B cell (primary cell): ENCODE measurements at regions of chr10 and their contacts with region 1.

Region 1: GRCh38 chr10:74234569-74234968 is 83.5 kb downstream of the ADK start:
- DNase-seq: no peak
- ATAC-seq: no peak
- H3K4me3 ChIP-seq: no peak overlapping the region
- H3K4me3 Mint-ChIP-seq: no peak overlapping the region
- H3K27ac ChIP-seq: peak overlapping the region in 1 of 2 donors; percentile 12
- H3K27ac Mint-ChIP-seq: no peak overlapping the region
- H3K4me1 ChIP-seq: peaks cover 0 to 2% of the 10 kb centered on the region in 2 donors
- H3K4me1 Mint-ChIP-seq: peaks cover 18% of the 10 kb centered on the region
- H3K27me3 ChIP-seq: no peaks in the 10 kb centered on the region
- H3K27me3 Mint-ChIP-seq: no peaks in the 10 kb centered on the region
- CTCF ChIP-seq: peak; percentile 63

Region 2: DNA sequence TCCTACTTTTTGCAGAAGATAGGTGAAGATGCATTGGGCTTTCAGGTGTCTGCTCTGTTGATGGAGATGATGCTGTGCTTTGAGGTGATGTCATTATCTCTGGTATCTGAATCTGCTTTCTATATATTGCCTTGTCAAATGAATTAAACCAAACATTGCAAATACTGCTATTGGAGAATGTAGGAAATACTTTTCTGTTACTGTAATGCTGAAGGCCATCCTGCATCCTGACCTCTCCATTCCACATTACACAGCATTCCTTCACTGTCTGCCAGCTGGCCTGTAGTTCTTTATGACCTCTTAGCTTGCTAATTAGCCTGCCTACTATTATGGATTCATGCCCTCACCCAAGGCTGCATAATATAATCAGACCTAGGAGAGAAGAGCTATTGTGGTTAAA is 163.4 kb before region 1 on chr10:
- CTCF ChIA-PET with region 1: no interaction called
- POLR2A ChIA-PET with region 1: no interaction called
- intact Hi-C with region 1: no loop called
- DNase-seq: no peak
- ATAC-seq: no peak
- H3K4me3 ChIP-seq: no peak overlapping the region
- H3K4me3 Mint-ChIP-seq: no peak overlapping the region
- H3K27ac ChIP-seq: no peak overlapping the region
- H3K27ac Mint-ChIP-seq: no peak overlapping the region
- H3K4me1 ChIP-seq: peaks cover 2 to 3% of the 10 kb centered on the region in 2 donors
- H3K4me1 Mint-ChIP-seq: peaks cover 8% of the 10 kb centered on the region
- H3K27me3 ChIP-seq: no peaks in the 10 kb centered on the region
- H3K27me3 Mint-ChIP-seq: no peaks in the 10 kb centered on the region
- CTCF ChIP-seq: no peak

Region 3: DNA sequence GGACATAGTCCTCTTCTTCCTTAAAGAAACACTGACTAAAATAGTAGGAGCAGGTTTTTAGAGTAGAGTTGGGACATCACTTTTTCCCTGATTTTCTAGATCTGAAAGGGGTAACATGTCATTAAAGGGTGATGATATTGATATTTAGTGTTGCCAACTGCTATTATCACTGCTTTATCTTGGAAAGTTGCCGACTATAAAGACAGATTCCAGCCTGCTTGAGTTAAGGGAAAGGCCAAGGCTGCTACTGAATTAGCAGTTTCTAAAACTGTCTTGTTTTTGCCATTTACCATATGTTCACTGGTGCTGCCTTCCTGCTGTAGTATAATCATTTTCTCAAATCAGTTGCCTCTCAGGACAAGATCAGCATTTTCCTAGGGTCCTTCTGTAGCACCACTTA is 113.7 kb before region 1 on chr10:
- CTCF ChIA-PET with region 1: interaction called, 18 read pairs
- POLR2A ChIA-PET with region 1: no interaction called
- intact Hi-C with region 1: no loop called
- DNase-seq: no peak
- ATAC-seq: no peak
- H3K4me3 ChIP-seq: no peak overlapping the region
- H3K4me3 Mint-ChIP-seq: no peak overlapping the region
- H3K27ac ChIP-seq: no peak overlapping the region
- H3K27ac Mint-ChIP-seq: peak overlapping the region; percentile 16
- H3K4me1 ChIP-seq: no peaks in the 10 kb centered on the region
- H3K4me1 Mint-ChIP-seq: no peaks in the 10 kb centered on the region
- H3K27me3 ChIP-seq: no peaks in the 10 kb centered on the region
- H3K27me3 Mint-ChIP-seq: no peaks in the 10 kb centered on the region
- CTCF ChIP-seq: no peak

Region 4: DNA sequence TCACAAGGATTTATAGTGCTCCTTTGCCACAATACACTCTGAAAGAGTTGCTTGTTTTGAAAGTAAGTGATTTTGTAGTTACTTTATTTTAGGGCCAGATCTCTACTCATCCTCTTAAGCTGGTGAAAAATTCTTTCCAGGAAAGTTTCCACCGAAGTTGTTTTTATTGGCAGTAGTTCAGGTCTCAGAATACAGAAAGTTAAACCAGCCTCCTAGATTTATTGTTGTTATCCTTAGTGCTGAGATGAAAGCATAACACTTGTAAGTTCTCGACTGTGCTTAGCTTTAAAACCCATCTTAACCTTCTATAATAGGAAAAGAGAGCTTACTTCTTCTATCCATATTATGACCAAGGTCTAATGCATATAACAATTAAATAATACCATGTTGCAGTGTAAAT is 89.4 kb before region 1 on chr10:
- CTCF ChIA-PET with region 1: interaction called, 20 read pairs
- POLR2A ChIA-PET with region 1: no interaction called
- intact Hi-C with region 1: no loop called
- DNase-seq: no peak
- ATAC-seq: no peak
- H3K4me3 ChIP-seq: no peak overlapping the region
- H3K4me3 Mint-ChIP-seq: no peak overlapping the region
- H3K27ac ChIP-seq: no peak overlapping the region
- H3K27ac Mint-ChIP-seq: no peak overlapping the region
- H3K4me1 ChIP-seq: peaks cover 9 to 22% of the 10 kb centered on the region in 2 donors
- H3K4me1 Mint-ChIP-seq: peaks cover 24% of the 10 kb centered on the region
- H3K27me3 ChIP-seq: no peaks in the 10 kb centered on the region
- H3K27me3 Mint-ChIP-seq: no peaks in the 10 kb centered on the region
- CTCF ChIP-seq: no peak

Region 5: GRCh38 chr10:74332398-74332797 is 97.8 kb after region 1 on chr10:
- CTCF ChIA-PET with region 1: no interaction called
- POLR2A ChIA-PET with region 1: no interaction called
- intact Hi-C with region 1: no loop called
- DNase-seq: no peak
- ATAC-seq: no peak
- H3K4me3 ChIP-seq: no peak overlapping the region
- H3K4me3 Mint-ChIP-seq: no peak overlapping the region
- H3K27ac ChIP-seq: no peak overlapping the region
- H3K27ac Mint-ChIP-seq: no peak overlapping the region
- H3K4me1 ChIP-seq: no peaks in the 10 kb centered on the region
- H3K4me1 Mint-ChIP-seq: peaks cover 9% of the 10 kb centered on the region
- H3K27me3 ChIP-seq: no peaks in the 10 kb centered on the region
- H3K27me3 Mint-ChIP-seq: no peaks in the 10 kb centered on the region
- CTCF ChIP-seq: no peak